PC-9 (cell line): ENCODE measurements at regions of chr17 and their contacts with region 1.

Region 1: DNA sequence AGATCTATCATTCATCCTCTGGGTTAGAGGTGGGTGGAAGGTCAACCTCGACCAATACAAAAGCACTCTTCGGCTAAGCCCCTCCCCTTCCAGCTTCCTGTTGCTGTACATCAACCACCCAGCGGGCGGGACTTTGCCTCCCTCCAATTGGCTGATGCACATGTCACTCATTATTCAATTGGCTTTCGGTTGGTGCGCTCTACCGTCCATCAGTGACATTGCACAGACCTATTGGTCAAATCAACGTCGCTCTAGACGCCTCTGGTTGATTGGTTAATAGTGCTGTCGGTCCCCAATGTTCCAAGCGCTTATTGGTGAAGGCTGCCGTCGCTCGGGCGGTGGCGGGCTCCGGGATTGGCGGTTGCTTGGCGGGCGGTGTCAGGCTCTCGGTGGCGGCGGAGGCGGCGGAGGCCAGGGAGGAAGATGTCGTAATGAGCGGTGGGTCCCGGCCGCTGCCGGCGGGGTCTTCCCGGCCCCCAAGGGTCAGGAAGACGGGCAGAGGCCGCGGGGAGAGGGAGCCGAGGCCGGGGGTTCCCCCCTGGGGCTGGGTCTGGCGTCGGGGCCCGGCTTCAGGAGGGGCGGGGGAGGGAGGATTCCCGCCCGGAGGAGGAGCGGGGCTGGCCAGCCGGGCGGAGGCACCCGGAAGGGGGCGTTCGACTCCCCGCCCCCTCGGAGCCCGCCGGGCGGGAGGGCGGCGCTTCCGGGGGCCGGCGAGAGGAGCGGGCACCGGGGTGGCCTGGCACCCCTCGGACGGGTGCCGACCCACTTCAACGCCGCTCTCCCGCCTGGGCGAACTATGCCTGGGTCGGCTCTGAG is at the start of gene SP2:
- DNase-seq: peak; percentile 99 to 100
- H3K4me3 ChIP-seq: peak within 1 kb of the TSS; percentile 93
- H3K27ac ChIP-seq: peak within 1 kb of the TSS; percentile 74
- H3K4me1 ChIP-seq: peaks cover 32% of the 10 kb centered on the region
- H3K27me3 ChIP-seq: no peaks in the 10 kb centered on the region
- CTCF ChIP-seq: peak; percentile 27; the same call in 1 of the 2 replicates
- total RNA-seq, gene SP2: 13.5 and 18.0 TPM in 2 replicates

Region 2: GRCh38 chr17:47822785-47823184 is 73.3 kb before region 1 on chr17:
- CTCF ChIA-PET with region 1: no interaction called
- POLR2A ChIA-PET with region 1: no interaction called
- intact Hi-C with region 1: no loop called
- DNase-seq: no peak
- H3K4me3 ChIP-seq: no peak overlapping the region
- H3K27ac ChIP-seq: peak overlapping the region; percentile 79; the same call in 1 of the 2 replicates
- H3K4me1 ChIP-seq: peaks cover 30% of the 10 kb centered on the region
- H3K27me3 ChIP-seq: no peaks in the 10 kb centered on the region
- CTCF ChIP-seq: no peak

Region 3: GRCh38 chr17:47925677-47925987 is 29.6 kb after region 1 on chr17:
- CTCF ChIA-PET with region 1: no interaction called
- POLR2A ChIA-PET with region 1: interaction called, 25 read pairs
- intact Hi-C with region 1: no loop called
- DNase-seq: no peak
- H3K4me3 ChIP-seq: no peak overlapping the region
- H3K27ac ChIP-seq: no peak overlapping the region
- H3K4me1 ChIP-seq: no peaks in the 10 kb centered on the region
- H3K27me3 ChIP-seq: no peaks in the 10 kb centered on the region
- CTCF ChIP-seq: no peak

Region 4: GRCh38 chr17:47970704-47971463 is 74.8 kb after region 1 on chr17 and contains the start of gene CDK5RAP3:
- CTCF ChIA-PET with region 1: interaction called, 6 read pairs
- POLR2A ChIA-PET with region 1: interaction called, 18 read pairs
- intact Hi-C with region 1: loop called (anchors 1 kb)
- DNase-seq: peak; percentile 97 to 99
- H3K4me3 ChIP-seq: peak within 1 kb of the TSS; percentile 78
- H3K27ac ChIP-seq: peak within 1 kb of the TSS; percentile 60
- H3K4me1 ChIP-seq: peaks cover 52% of the 10 kb centered on the region
- H3K27me3 ChIP-seq: no peaks in the 10 kb centered on the region
- CTCF ChIP-seq: peak; percentile 90
- total RNA-seq, gene CDK5RAP3: 147 and 195 TPM in 2 replicates

Region 5: DNA sequence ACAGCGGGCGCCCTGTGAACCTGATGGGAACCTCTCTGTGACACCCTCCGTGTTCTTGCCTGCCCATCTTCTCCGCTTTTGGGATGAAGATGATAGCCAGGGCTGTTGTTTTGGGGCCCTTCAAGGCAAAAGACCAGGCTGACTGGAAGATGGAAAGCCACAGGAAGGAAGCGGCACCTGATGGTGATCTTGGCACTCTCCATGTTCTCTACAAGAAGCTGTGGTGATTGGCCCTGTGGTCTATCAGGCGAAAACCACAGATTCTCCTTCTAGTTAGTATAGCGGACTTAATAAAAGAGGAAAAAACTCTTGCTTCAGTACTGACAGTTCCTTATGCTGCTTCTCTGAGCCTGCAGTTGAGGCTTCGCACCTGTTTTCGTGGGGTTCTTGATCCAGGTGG is 85.4 kb after region 1 on chr17:
- CTCF ChIA-PET with region 1: no interaction called
- POLR2A ChIA-PET with region 1: no interaction called
- intact Hi-C with region 1: no loop called
- DNase-seq: no peak
- H3K4me3 ChIP-seq: no peak overlapping the region
- H3K27ac ChIP-seq: no peak overlapping the region
- H3K4me1 ChIP-seq: no peaks in the 10 kb centered on the region
- H3K27me3 ChIP-seq: no peaks in the 10 kb centered on the region
- CTCF ChIP-seq: no peak

Region 6: GRCh38 chr17:48001197-48001596 is 105.1 kb after region 1 on chr17:
- CTCF ChIA-PET with region 1: no interaction called
- POLR2A ChIA-PET with region 1: no interaction called
- intact Hi-C with region 1: no loop called
- DNase-seq: no peak
- H3K4me3 ChIP-seq: no peak overlapping the region
- H3K27ac ChIP-seq: no peak overlapping the region
- H3K4me1 ChIP-seq: peaks cover 34% of the 10 kb centered on the region
- H3K27me3 ChIP-seq: no peaks in the 10 kb centered on the region
- CTCF ChIP-seq: no peak

Region 7: DNA sequence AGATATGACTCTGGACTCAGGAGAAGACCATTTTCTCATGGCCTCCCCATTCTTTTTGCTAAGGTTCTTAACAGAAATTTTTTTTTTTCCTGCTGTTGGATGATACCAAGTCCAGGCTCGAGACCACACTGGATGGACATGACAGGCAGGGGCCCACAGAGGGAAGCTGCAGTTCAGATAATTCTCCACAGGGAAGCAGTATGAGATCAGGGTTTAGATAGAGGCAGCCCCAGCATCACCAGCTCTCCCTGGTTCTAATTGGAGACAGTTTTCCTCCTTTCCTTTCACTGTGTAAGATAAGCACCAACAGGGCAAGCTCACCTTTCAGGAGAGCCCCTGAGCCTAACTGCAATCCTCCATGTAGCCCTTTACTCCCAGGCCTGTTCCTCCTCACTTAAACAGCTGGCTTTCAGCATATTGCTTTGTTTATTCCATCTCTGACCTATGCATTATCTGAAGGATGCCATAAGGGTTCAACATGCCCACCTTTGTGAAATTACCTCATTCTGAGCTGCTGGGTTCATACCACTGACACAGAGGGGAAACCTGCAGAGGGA is 319.6 kb after region 1 on chr17:
- CTCF ChIA-PET with region 1: no interaction called
- POLR2A ChIA-PET with region 1: no interaction called
- intact Hi-C with region 1: no loop called
- DNase-seq: peak; percentile 40 to 52
- H3K4me3 ChIP-seq: no peak overlapping the region
- H3K27ac ChIP-seq: no peak overlapping the region
- H3K4me1 ChIP-seq: no peaks in the 10 kb centered on the region
- H3K27me3 ChIP-seq: no peaks in the 10 kb centered on the region
- CTCF ChIP-seq: peak; percentile 88